ENCODE measurements at regions of chr7 and their contacts with region 1.

Region 1: DNA sequence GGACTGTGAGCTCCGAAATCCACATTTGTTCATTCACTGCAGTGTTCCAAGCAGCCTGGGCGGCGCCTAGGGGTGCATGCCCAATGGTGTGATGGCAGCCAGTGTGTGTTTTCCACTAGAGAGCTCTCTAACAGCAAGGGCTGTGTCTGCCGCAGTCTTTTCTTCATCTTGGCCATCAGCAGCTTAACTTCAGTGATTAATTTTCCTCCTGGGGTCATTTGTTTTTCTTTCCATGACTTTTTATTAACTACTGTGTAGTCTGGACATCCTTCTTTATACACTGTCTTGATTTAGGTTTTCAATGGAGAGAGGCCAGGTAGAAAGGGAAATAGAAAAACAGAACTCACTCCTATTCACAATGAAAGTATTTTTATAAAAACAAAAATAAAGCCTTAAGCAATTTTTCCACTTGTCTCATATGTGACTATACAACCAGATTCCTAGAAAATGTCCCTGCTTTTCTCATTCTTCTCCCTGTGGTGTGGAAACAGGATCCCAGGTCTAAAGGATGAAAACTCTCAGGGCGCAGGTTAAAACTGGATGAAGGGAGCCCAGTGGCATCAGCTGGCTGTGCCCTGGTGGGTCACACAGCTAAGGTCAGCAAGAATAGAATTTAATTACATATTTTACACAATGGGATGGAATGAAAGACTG is 176.8 kb downstream of the PKD1L1 start:
- DNase-seq: peak; percentile 87 to 88
- ATAC-seq: peak; percentile 95
- H3K4me3 ChIP-seq: no peak overlapping the region
- H3K27ac ChIP-seq: peak overlapping the region; percentile 82 to 94
- H3K4me1 ChIP-seq: peaks cover 4% of the 10 kb centered on the region in 2 donors
- H3K27me3 ChIP-seq: no peaks in the 10 kb centered on the region

Region 2: GRCh38 chr7:47571331-47572093 is 200.0 kb before region 1 on chr7:
- intact Hi-C with region 1: loop called in 1 of 2 experiments (anchors 10 kb)
- DNase-seq: peak; percentile 91 to 94
- ATAC-seq: peak; percentile 72
- H3K4me3 ChIP-seq: no peak overlapping the region
- H3K27ac ChIP-seq: peak overlapping the region; percentile 62 to 99
- H3K4me1 ChIP-seq: peaks cover 0 to 6% of the 10 kb centered on the region in 2 donors
- H3K27me3 ChIP-seq: no peaks in the 10 kb centered on the region

Region 3: DNA sequence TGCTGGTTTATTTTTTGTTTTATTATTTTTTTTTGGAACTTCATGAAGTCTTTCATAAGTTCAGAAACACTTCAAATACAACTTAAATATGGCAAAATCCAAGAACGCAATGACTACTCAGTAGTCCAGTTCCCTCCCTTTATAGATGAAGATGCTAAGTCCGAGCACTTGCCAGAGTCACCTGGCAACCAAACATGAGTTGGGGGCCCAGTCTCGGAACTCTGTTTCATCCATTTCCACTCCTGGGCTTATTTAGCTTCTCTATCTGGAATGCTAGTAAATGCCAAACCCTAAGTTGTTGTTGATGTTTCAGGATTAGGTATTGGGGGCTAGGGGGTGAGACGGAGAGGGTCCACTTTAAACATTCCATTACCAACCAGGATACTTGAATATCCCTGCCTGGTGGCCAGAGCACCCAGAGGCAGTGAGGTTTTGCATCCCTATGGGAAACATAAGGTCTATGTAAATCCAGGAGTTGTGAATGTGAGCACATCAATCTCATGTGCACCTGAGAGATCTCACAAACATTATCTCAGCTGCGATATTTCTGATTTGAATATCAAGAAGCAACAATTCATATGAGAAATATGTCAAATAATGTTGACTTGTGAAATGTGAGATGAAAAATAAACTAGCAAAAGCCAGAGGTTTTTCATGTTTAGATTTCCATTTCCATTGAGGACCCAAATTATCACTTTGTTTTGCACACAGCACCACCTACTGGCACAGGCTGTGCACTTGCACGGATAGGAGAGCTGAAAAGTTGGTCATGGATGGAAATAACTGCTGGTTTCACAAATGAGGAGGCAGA is 47.5 kb after region 1 on chr7:
- intact Hi-C with region 1: loop called in 1 of 2 experiments (anchors 5 kb)
- DNase-seq: peak; percentile 78 to 90
- ATAC-seq: peak; percentile 87
- H3K4me3 ChIP-seq: no peak overlapping the region
- H3K27ac ChIP-seq: no peak overlapping the region
- H3K4me1 ChIP-seq: peaks cover 0 to 2% of the 10 kb centered on the region in 2 donors
- H3K27me3 ChIP-seq: no peaks in the 10 kb centered on the region

Measured in aorta (tissue), 5 donors.